IMR-90 (cell line): ENCODE measurements at regions of chr11 and their contacts with region 1.

Region 1: GRCh38 chr11:29333993-29334775 is 682.6 kb downstream of the KCNA4 start:
- DNase-seq: peak; percentile 88
- ATAC-seq: peak; percentile 67
- H3K4me3 ChIP-seq: no peak overlapping the region
- H3K27ac ChIP-seq: peak overlapping the region; percentile 93
- H3K4me1 ChIP-seq: peaks cover 14% of the 10 kb centered on the region
- H3K27me3 ChIP-seq: no peaks in the 10 kb centered on the region
- CTCF ChIP-seq: peak; percentile 76
- POLR2A ChIP-seq: no peak
- RAD21 ChIP-seq: peak; percentile 91

Region 2: GRCh38 chr11:27506200-27507182 is 1827.7 kb before region 1 on chr11 and contains the start of gene LIN7C:
- CTCF ChIA-PET with region 1: no interaction called
- POLR2A ChIA-PET with region 1: no interaction called
- dilution Hi-C with region 1: no loop called
- in situ Hi-C with region 1: loop called (anchors 25 kb)
- intact Hi-C with region 1: loop called (anchors 10 kb)
- DNase-seq: peak; percentile 92
- ATAC-seq: peak; percentile 95
- H3K4me3 ChIP-seq: peak within 1 kb of the TSS; percentile 73
- H3K27ac ChIP-seq: peak within 1 kb of the TSS; percentile 87
- H3K4me1 ChIP-seq: peaks cover 2% of the 10 kb centered on the region; the same call in 1 of the 2 replicates
- H3K27me3 ChIP-seq: no peaks in the 10 kb centered on the region
- CTCF ChIP-seq: 0 out of 2 replicates have a peak, but pooled peaks have one; percentile 2
- POLR2A ChIP-seq: peak; percentile 95
- RAD21 ChIP-seq: no peak
- total RNA-seq, gene LIN7C: 25.5 and 58.3 TPM in 2 replicates

Region 3: DNA sequence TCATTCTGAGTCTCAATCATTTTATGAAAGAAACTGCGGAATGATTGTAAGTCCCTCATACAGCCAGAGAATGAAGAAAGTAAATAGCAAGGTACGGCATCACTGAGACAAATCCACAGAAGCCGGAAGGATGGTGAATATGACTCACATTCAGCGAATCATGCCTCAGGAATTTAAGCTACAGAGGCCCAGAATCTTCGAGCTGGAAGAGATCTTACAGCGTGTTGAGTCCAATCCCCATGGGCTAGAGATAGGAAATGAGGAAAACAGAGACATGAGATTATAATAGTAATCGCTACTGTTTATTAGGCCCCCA is 1399.4 kb before region 1 on chr11:
- CTCF ChIA-PET with region 1: no interaction called
- POLR2A ChIA-PET with region 1: no interaction called
- dilution Hi-C with region 1: no loop called
- in situ Hi-C with region 1: loop called (anchors 10 kb)
- intact Hi-C with region 1: loop called (anchors 10 kb)
- DNase-seq: peak; percentile 98
- ATAC-seq: peak; percentile 69
- H3K4me3 ChIP-seq: peak overlapping the region; percentile 11; the same call in 1 of the 2 replicates
- H3K27ac ChIP-seq: peak overlapping the region; percentile 90
- H3K4me1 ChIP-seq: peaks cover 6% of the 10 kb centered on the region
- H3K27me3 ChIP-seq: no peaks in the 10 kb centered on the region
- CTCF ChIP-seq: no peak
- POLR2A ChIP-seq: no peak; the same call in none of the 2 replicates
- RAD21 ChIP-seq: peak; percentile 29; the same call in 1 of the 2 replicates

Region 4: DNA sequence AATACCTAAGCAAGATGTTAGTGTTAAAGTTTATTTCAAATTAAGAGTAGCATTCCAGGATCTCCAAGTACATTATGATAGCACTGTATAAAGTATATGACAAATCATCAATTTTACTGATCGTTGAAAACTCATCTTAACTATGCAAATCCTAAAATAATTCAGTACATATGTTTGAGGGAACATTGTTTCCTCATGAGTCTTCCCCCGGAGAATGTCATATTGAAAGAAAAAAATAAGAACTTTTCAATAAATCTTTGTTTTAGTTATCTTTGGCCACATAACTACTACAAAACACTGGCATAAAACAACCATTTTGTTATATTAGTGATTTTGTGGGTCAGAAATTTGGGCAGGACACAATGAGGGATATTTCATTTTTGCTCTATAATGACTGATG is 1090.6 kb before region 1 on chr11:
- CTCF ChIA-PET with region 1: no interaction called
- POLR2A ChIA-PET with region 1: no interaction called
- dilution Hi-C with region 1: no loop called
- in situ Hi-C with region 1: no loop called
- intact Hi-C with region 1: loop called (anchors 10 kb)
- DNase-seq: peak; percentile 14
- ATAC-seq: 0 out of 2 replicates have a peak, but pooled peaks have one; percentile 24
- H3K4me3 ChIP-seq: no peak overlapping the region
- H3K27ac ChIP-seq: no peak overlapping the region
- H3K4me1 ChIP-seq: no peaks in the 10 kb centered on the region; the same call in 1 of the 2 replicates
- H3K27me3 ChIP-seq: no peaks in the 10 kb centered on the region
- CTCF ChIP-seq: no peak
- POLR2A ChIP-seq: no peak
- RAD21 ChIP-seq: no peak

Region 5: GRCh38 chr11:28464252-28464867 is 869.8 kb before region 1 on chr11:
- CTCF ChIA-PET with region 1: interaction called, 5 read pairs
- POLR2A ChIA-PET with region 1: no interaction called
- dilution Hi-C with region 1: no loop called
- in situ Hi-C with region 1: no loop called
- intact Hi-C with region 1: loop called (anchors 2 kb)
- DNase-seq: peak; percentile 86
- ATAC-seq: peak; percentile 77
- H3K4me3 ChIP-seq: no peak overlapping the region
- H3K27ac ChIP-seq: peak overlapping the region; percentile 98
- H3K4me1 ChIP-seq: peaks cover 22% of the 10 kb centered on the region
- H3K27me3 ChIP-seq: no peaks in the 10 kb centered on the region
- CTCF ChIP-seq: no peak
- POLR2A ChIP-seq: no peak
- RAD21 ChIP-seq: no peak; the same call in none of the 2 replicates

Region 6: GRCh38 chr11:28566339-28567089 is 767.7 kb before region 1 on chr11:
- CTCF ChIA-PET with region 1: no interaction called
- POLR2A ChIA-PET with region 1: no interaction called
- dilution Hi-C with region 1: no loop called
- in situ Hi-C with region 1: loop called (anchors 25 kb)
- intact Hi-C with region 1: loop called (anchors 2 kb)
- DNase-seq: peak; percentile 100
- ATAC-seq: peak; percentile 98
- H3K4me3 ChIP-seq: peak overlapping the region; percentile 3; the same call in 1 of the 2 replicates
- H3K27ac ChIP-seq: peak overlapping the region; percentile 78
- H3K4me1 ChIP-seq: peaks cover 5% of the 10 kb centered on the region
- H3K27me3 ChIP-seq: no peaks in the 10 kb centered on the region
- CTCF ChIP-seq: no peak
- POLR2A ChIP-seq: peak; percentile 13; the same call in 1 of the 2 replicates
- RAD21 ChIP-seq: peak; percentile 40

Region 7: DNA sequence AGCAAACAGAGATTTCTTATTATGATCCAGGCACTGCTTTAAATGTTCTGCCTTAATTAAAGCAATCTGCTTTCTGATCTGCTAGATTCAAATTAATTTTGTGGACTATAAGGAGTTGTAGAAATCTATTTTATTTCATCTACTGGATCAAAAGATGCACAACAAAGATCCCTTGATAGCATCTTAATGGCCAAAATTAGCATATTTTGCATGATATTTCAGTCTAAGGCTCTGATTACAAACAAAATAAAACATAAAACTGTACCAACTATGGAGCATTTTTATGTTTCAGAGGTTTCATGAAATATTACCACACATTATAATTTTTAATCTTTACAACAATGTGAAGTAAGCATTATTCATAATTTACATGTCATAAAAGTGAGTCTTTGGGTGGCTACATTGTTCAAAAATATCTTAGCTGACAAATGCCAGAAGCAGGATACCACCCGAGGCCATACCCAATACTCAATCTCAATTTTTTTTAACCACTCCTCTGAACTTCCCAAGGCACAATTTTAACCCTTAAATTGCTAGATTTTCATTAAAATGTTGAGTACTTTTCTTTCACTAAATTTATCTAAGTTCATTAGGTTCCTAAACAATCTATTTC is 246.9 kb before region 1 on chr11:
- CTCF ChIA-PET with region 1: no interaction called
- POLR2A ChIA-PET with region 1: no interaction called
- dilution Hi-C with region 1: no loop called
- in situ Hi-C with region 1: no loop called
- intact Hi-C with region 1: no loop called
- DNase-seq: no peak
- ATAC-seq: no peak
- H3K4me3 ChIP-seq: no peak overlapping the region
- H3K27ac ChIP-seq: no peak overlapping the region
- H3K4me1 ChIP-seq: peaks cover 4% of the 10 kb centered on the region
- H3K27me3 ChIP-seq: no peaks in the 10 kb centered on the region
- CTCF ChIP-seq: no peak
- POLR2A ChIP-seq: no peak
- RAD21 ChIP-seq: no peak

Region 8: DNA sequence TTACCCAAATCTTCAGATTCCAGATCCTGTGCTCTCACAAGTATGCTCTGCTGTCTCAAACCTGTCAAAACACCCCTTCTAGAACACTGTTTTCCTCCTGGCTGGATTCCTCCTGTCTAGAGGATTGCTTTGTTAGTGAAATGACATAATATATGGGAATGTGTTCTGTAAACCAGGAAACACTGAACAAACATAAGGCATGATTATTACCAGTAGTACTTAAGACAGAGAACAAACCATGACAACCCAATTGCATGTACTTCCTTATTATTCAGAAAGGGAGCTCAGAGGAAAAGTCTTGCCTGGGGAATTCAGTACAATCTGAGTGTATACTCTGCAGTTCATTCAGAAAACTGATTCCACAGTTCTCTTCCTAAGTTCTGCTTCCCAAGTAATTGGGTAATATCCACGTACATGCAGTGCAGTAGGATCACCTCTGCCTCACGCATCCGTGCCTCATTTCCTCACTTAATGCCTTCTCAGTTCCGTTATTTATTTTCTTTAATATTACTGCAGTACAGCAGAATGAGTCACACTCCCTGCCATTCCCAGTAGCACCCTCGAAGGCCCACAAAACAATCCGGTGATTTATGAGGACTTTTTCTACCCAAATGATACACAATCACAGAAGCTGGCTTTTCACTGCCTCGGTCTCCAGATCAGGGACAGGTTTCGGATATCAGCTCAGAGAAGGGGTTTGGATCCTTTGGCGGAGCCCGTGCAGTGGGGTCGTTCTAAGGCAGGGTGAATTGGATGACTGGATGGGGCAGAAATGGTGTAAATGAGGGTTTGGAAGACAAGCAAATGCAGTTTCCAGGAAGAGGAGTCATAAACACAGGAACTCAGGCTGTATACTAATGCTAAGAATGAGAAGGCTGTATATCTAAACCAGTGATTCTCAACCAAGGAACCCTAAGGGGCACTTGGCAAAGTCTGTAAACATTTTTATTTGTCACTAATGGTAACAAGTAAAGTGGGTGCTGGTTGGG is 214.2 kb before region 1 on chr11:
- CTCF ChIA-PET with region 1: no interaction called
- POLR2A ChIA-PET with region 1: no interaction called
- dilution Hi-C with region 1: no loop called
- in situ Hi-C with region 1: no loop called
- intact Hi-C with region 1: loop called (anchors 1 kb)
- DNase-seq: peak; percentile 99
- ATAC-seq: peak; percentile 86
- H3K4me3 ChIP-seq: peak overlapping the region; percentile 23; the same call in 1 of the 2 replicates
- H3K27ac ChIP-seq: peak overlapping the region; percentile 92
- H3K4me1 ChIP-seq: peaks cover 9% of the 10 kb centered on the region
- H3K27me3 ChIP-seq: no peaks in the 10 kb centered on the region
- CTCF ChIP-seq: no peak
- POLR2A ChIP-seq: peak; percentile 26; the same call in 1 of the 2 replicates
- RAD21 ChIP-seq: peak; percentile 8; the same call in 1 of the 2 replicates